ENCODE measurements at regions of chr18 and their contacts with region 1.

Region 1: GRCh38 chr18:12839526-12840196 is 44.4 kb downstream of the PTPN2 start:
- DNase-seq: no peak
- ATAC-seq: peak in 1 of 4 donors; percentile 36
- H3K4me3 ChIP-seq: no peak overlapping the region
- H3K27ac ChIP-seq: no peak overlapping the region
- H3K4me1 ChIP-seq: peaks cover 12% of the 10 kb centered on the region
- H3K27me3 ChIP-seq: no peaks in the 10 kb centered on the region
- CTCF ChIP-seq: no peak

Region 2: DNA sequence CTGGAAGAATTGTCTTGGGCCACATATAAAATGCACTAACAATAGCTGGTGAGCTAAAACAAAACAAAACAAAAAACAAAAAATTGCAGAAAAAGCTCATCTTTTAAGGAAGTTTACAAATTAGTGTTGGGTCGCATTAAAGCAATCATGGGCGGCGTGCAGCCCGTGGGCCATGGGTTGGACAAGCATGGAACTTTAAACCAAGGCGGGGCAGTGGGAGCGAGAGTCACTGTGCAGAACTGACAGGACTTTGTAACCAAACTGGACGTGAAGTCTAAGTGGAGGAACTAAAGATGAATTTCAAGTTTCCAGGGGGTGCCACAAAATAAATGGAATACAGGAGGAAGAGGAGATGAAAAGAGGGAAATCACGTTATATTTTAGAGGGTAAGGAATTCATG is 56.1 kb before region 1 on chr18:
- intact Hi-C with region 1: loop called in 1 of 2 experiments (anchors 10 kb)
- DNase-seq: no peak
- ATAC-seq: no peak
- H3K4me3 ChIP-seq: no peak overlapping the region
- H3K27ac ChIP-seq: no peak overlapping the region
- H3K4me1 ChIP-seq: no peaks in the 10 kb centered on the region
- H3K27me3 ChIP-seq: no peaks in the 10 kb centered on the region
- CTCF ChIP-seq: no peak

Region 3: GRCh38 chr18:12796448-12796847 is 43.2 kb before region 1 on chr18:
- intact Hi-C with region 1: no loop called
- DNase-seq: no peak
- ATAC-seq: no peak
- H3K4me3 ChIP-seq: no peak overlapping the region
- H3K27ac ChIP-seq: no peak overlapping the region
- H3K4me1 ChIP-seq: no peaks in the 10 kb centered on the region
- H3K27me3 ChIP-seq: no peaks in the 10 kb centered on the region
- CTCF ChIP-seq: no peak